ENCODE measurements at regions of chr3 and their contacts with region 1.

Region 1: GRCh38 chr3:124986158-124987143 is 51.9 kb upstream of the MUC13 start:
- DNase-seq: peak; percentile 91
- ATAC-seq: peak; percentile 92
- H3K4me3 ChIP-seq: peak overlapping the region in 1 of 2 experiments; percentile 12; a peak in 1 of 4 replicates
- H3K27ac ChIP-seq: peak overlapping the region; percentile 63
- H3K4me1 ChIP-seq: peaks cover 21 to 29% of the 10 kb centered on the region in 2 experiments
- H3K27me3 ChIP-seq: no peaks in the 10 kb centered on the region
- CTCF ChIP-seq: peak; percentile 75 to 84 (median 83); a peak in 5 of 6 replicates
- POLR2A ChIP-seq: no peak
- RAD21 ChIP-seq: peak; percentile 65

Region 2: DNA sequence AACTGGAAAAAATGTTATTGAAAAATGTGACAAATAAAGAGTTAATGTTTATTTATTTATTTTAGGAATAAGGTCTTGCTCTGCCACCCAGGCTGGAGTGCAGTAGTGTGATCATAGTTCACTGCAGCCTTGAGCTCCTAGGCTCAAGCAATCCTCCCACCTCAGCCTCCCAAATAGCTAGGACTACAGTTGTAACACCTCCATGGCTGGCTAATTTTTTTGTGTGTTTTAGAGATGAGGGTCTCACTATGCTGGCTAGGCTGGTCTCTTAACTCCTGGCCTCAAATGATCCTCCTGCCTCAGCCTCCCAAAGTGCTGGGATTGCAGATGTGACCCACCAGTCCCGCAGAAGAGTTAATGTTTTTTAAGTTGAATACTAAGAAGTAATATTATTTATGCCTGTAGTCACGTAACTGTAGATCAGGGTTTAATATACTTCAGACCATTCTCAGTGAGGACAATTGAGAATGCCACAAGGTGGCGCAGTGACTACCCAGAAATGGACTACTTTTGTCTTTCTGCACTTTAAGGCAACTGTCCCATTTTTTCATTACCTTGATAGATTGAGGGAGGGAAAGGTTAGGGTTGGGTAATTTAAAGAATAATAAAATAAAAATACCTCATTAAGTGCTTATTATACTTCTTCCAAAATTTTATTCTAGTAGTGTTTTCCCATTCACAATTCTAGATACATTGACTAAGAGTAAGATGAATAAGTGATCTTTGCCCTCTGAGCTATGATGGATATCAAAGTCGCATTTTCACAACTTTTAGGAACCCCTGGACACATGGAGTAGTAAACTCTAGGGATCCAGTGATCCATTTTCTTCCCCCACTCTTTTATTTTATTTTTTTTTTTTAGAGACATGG is 57.9 kb before region 1 on chr3:
- CTCF ChIA-PET with region 1: interaction called, 9 read pairs
- POLR2A ChIA-PET with region 1: no interaction called
- RAD21 ChIA-PET with region 1: no interaction called
- intact Hi-C with region 1: loop called (anchors 1 kb)
- DNase-seq: peak; percentile 60
- ATAC-seq: peak; percentile 91
- H3K4me3 ChIP-seq: no peak overlapping the region
- H3K27ac ChIP-seq: no peak overlapping the region
- H3K4me1 ChIP-seq: peaks cover 0 to 3% of the 10 kb centered on the region in 2 experiments; a peak in 1 of 4 replicates
- H3K27me3 ChIP-seq: no peaks in the 10 kb centered on the region
- CTCF ChIP-seq: peak; percentile 73 to 84 (median 82); a peak in 5 of 6 replicates
- POLR2A ChIP-seq: no peak
- RAD21 ChIP-seq: peak; percentile 83